HepG2 (cell line): ENCODE measurements at regions of chr13 and their contacts with region 1.

Region 1: DNA sequence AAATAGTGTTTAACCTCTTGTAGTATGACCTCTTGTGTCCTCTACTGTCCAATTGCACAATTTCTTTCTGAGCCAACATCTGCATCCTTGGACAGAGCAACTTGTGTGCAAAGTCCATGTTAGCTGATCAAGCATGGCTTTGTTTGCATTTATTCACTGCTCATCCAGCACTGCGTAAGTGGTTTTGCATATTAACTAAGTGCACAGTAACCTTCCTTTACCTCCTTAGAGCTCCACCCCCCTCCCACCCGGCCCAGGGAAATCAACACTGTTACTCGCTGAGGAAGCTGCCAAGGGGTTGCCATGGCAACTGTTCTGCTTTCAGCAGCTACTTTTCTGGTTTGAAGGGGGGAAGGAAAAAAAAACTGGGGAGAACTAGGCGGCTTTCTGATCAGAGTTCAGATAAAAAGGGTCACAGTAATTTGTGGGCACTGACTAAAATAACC is 153.5 kb upstream of the KLF12 start:
- DNase-seq: peak; percentile 89
- ATAC-seq: peak; percentile 81
- H3K4me3 ChIP-seq: peak overlapping the region in 2 of 3 experiments; percentile 49 to 59; a peak in 5 of 6 replicates
- H3K27ac ChIP-seq: peak overlapping the region; percentile 57
- H3K4me1 ChIP-seq: peaks cover 31% of the 10 kb centered on the region
- H3K27me3 ChIP-seq: no peaks in the 10 kb centered on the region
- CTCF ChIP-seq: no peak
- EP300 ChIP-seq: peak; percentile 82 to 89; a peak in 3 of 4 replicates
- POLR2A ChIP-seq: no peak
- RAD21 ChIP-seq: no peak

Region 2: DNA sequence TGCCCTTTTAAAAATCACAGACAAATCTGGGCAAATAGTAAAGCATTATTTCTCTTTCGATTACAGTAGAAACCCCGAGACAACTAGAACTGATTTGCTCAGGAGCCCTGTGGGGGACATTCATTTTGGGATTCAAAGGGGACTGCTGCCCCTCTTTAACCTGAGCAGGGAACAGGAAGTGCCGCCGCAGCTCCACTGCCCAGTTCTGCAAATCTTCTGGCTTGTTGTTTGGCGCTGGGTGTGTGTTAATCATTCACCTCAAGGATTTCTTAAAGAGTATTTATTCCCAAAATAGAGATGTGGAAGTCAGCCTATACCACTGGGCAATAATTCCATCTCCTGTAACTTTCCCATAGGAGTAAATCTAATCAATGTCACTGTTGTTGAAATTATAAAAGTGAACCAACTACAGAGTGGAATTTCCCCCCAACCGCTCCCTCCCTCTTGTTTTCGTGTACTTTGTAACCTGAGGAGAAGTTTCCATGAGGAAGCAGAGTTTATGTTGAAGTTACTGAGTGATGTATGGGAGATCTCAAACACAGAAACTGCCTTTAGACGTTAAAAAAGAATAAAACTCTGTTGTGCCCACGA is 669.4 kb before region 1 on chr13:
- CTCF ChIA-PET with region 1: no interaction called
- POLR2A ChIA-PET with region 1: no interaction called
- in situ Hi-C with region 1: no loop called
- intact Hi-C with region 1: no loop called
- DNase-seq: peak; percentile 8
- ATAC-seq: peak; percentile 74
- H3K4me3 ChIP-seq: no peak overlapping the region
- H3K27ac ChIP-seq: no peak overlapping the region
- H3K4me1 ChIP-seq: peaks cover 14% of the 10 kb centered on the region
- H3K27me3 ChIP-seq: no peaks in the 10 kb centered on the region
- CTCF ChIP-seq: no peak
- EP300 ChIP-seq: no peak
- POLR2A ChIP-seq: no peak
- RAD21 ChIP-seq: no peak

Region 3: DNA sequence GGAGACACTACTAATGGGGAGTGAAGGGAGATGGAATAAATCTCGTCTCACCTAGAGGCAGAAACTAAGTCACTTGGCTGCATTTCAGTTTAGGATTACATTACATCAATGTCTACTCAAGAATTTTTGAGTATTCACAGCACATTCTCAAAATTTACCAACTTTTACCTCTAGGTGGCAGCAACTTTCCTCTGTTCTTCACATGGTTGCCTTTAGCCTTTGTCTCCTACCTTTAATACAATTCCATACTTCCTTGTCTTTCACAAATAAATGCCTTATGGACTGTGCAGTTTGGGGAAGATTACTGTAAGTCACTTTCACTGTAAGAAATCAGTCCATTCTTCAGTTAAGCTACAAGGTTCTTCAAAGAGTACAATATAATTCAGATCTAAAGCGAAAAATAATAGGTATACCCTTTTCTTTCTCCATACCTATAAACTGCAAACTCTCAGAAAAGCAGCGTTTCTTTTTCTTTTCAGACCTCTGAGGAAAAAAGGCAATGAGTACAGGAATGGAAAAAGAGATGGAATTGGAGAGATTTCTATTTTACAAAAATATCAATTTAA is 532.9 kb before region 1 on chr13:
- CTCF ChIA-PET with region 1: interaction called, 8 read pairs
- POLR2A ChIA-PET with region 1: no interaction called
- in situ Hi-C with region 1: loop called (anchors 10 kb)
- intact Hi-C with region 1: loop called (anchors 1 kb)
- DNase-seq: peak; percentile 59
- ATAC-seq: peak; percentile 83
- H3K4me3 ChIP-seq: no peak overlapping the region
- H3K27ac ChIP-seq: no peak overlapping the region
- H3K4me1 ChIP-seq: no peaks in the 10 kb centered on the region
- H3K27me3 ChIP-seq: no peaks in the 10 kb centered on the region
- CTCF ChIP-seq: peak; percentile 76
- EP300 ChIP-seq: no peak
- POLR2A ChIP-seq: no peak
- RAD21 ChIP-seq: peak; percentile 53; the same call in 1 of the 2 replicates

Region 4: GRCh38 chr13:73849292-73849691 is 438.5 kb before region 1 on chr13:
- CTCF ChIA-PET with region 1: no interaction called
- POLR2A ChIA-PET with region 1: no interaction called
- in situ Hi-C with region 1: no loop called
- intact Hi-C with region 1: loop called (anchors 1 kb)
- DNase-seq: peak; percentile 17
- ATAC-seq: peak; percentile 74
- H3K4me3 ChIP-seq: no peak overlapping the region
- H3K27ac ChIP-seq: no peak overlapping the region
- H3K4me1 ChIP-seq: no peaks in the 10 kb centered on the region
- H3K27me3 ChIP-seq: no peaks in the 10 kb centered on the region
- CTCF ChIP-seq: peak; percentile 28; the same call in 1 of the 2 replicates
- EP300 ChIP-seq: no peak
- POLR2A ChIP-seq: no peak
- RAD21 ChIP-seq: no peak

Region 5: GRCh38 chr13:74040200-74040599 is 247.5 kb before region 1 on chr13:
- CTCF ChIA-PET with region 1: no interaction called
- POLR2A ChIA-PET with region 1: no interaction called
- in situ Hi-C with region 1: no loop called
- intact Hi-C with region 1: loop called (anchors 1 kb)
- DNase-seq: peak; percentile 49
- ATAC-seq: peak; percentile 100
- H3K4me3 ChIP-seq: no peak overlapping the region
- H3K27ac ChIP-seq: no peak overlapping the region
- H3K4me1 ChIP-seq: no peaks in the 10 kb centered on the region
- H3K27me3 ChIP-seq: no peaks in the 10 kb centered on the region
- CTCF ChIP-seq: peak; percentile 74
- EP300 ChIP-seq: no peak
- POLR2A ChIP-seq: no peak
- RAD21 ChIP-seq: peak; percentile 42; the same call in 1 of the 2 replicates

Region 6: GRCh38 chr13:74090869-74091605 is 196.7 kb before region 1 on chr13:
- CTCF ChIA-PET with region 1: no interaction called
- POLR2A ChIA-PET with region 1: no interaction called
- in situ Hi-C with region 1: no loop called
- intact Hi-C with region 1: no loop called
- DNase-seq: no peak
- ATAC-seq: no peak
- H3K4me3 ChIP-seq: no peak overlapping the region
- H3K27ac ChIP-seq: no peak overlapping the region
- H3K4me1 ChIP-seq: peaks cover 3% of the 10 kb centered on the region
- H3K27me3 ChIP-seq: no peaks in the 10 kb centered on the region
- CTCF ChIP-seq: no peak
- EP300 ChIP-seq: no peak
- POLR2A ChIP-seq: no peak
- RAD21 ChIP-seq: no peak

Region 7: GRCh38 chr13:74168263-74168675 is 119.5 kb before region 1 on chr13:
- CTCF ChIA-PET with region 1: no interaction called
- POLR2A ChIA-PET with region 1: no interaction called
- in situ Hi-C with region 1: no loop called
- intact Hi-C with region 1: loop called (anchors 2 kb)
- DNase-seq: peak; percentile 35
- ATAC-seq: peak; percentile 95
- H3K4me3 ChIP-seq: peak overlapping the region in 1 of 3 experiments; percentile 7; a peak in 2 of 6 replicates
- H3K27ac ChIP-seq: peak overlapping the region; percentile 12
- H3K4me1 ChIP-seq: peaks cover 15% of the 10 kb centered on the region
- H3K27me3 ChIP-seq: peaks cover 0 to 2% of the 10 kb centered on the region in 2 experiments; a peak in 1 of 5 replicates
- CTCF ChIP-seq: no peak
- EP300 ChIP-seq: peak in 1 of 2 experiments; percentile 48; a peak in 1 of 4 replicates
- POLR2A ChIP-seq: no peak
- RAD21 ChIP-seq: no peak

Region 8: DNA sequence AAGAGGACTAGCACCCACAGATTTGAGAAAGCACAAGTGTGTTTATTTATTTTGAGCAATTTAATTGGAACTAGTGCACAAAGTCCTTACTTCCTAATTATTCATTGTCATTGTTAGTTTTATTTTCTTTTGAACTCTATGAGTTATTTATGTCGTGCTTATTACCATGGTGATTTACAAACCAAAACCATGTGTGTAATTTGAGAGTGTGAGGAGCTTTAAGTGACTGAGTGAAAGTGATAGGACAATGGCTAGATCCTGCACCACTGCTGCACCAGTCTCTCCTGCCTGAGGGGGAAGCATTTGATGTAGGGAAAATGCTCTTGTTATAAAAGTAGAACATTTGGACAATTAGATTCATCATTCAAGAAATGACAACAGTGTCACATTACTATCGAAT is 18.7 kb after region 1 on chr13:
- CTCF ChIA-PET with region 1: no interaction called
- POLR2A ChIA-PET with region 1: no interaction called
- in situ Hi-C with region 1: no loop called
- intact Hi-C with region 1: no loop called
- DNase-seq: no peak
- ATAC-seq: no peak
- H3K4me3 ChIP-seq: no peak overlapping the region
- H3K27ac ChIP-seq: no peak overlapping the region
- H3K4me1 ChIP-seq: no peaks in the 10 kb centered on the region
- H3K27me3 ChIP-seq: no peaks in the 10 kb centered on the region
- CTCF ChIP-seq: no peak
- EP300 ChIP-seq: no peak
- POLR2A ChIP-seq: no peak
- RAD21 ChIP-seq: no peak

Region 9: DNA sequence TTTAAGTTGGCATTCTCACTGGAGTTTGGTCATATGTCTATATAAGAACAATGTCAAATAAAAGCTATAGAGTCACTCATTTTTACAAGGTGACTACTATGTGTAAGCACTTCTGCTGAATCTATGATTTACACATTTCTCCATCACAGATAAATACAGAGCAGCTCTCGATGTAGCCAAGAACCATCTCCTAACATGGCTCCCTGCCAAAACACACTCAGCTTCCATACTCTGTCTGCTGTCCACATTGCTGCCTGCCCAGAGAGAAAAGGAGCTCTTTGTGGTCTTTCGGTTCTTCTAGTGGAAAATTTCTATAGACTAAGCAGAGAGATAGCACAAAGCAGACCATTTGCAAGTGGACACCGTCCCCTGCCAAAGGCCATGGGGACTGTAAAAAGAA is 37.4 kb after region 1 on chr13:
- CTCF ChIA-PET with region 1: no interaction called
- POLR2A ChIA-PET with region 1: no interaction called
- in situ Hi-C with region 1: no loop called
- intact Hi-C with region 1: loop called (anchors 2 kb)
- DNase-seq: peak; percentile 53
- ATAC-seq: peak; percentile 71
- H3K4me3 ChIP-seq: no peak overlapping the region
- H3K27ac ChIP-seq: no peak overlapping the region
- H3K4me1 ChIP-seq: no peaks in the 10 kb centered on the region; the same call in 1 of the 2 replicates
- H3K27me3 ChIP-seq: no peaks in the 10 kb centered on the region
- CTCF ChIP-seq: no peak
- EP300 ChIP-seq: no peak
- POLR2A ChIP-seq: no peak
- RAD21 ChIP-seq: no peak